Ascending aorta (tissue), 2 donors: ENCODE measurements at regions of chr16 and their contacts with region 1.

Region 1: GRCh38 chr16:51024703-51025102 is 126.4 kb downstream of the SALL1 start:
- DNase-seq: no peak
- H3K4me3 ChIP-seq: no peak overlapping the region
- H3K27ac ChIP-seq: no peak overlapping the region
- H3K4me1 ChIP-seq: no peaks in the 10 kb centered on the region
- H3K27me3 ChIP-seq: no peaks in the 10 kb centered on the region
- CTCF ChIP-seq: no peak

Region 2: GRCh38 chr16:50967827-50968612 is 56.7 kb before region 1 on chr16:
- intact Hi-C with region 1: loop called (anchors 10 kb)
- DNase-seq: no peak
- H3K4me3 ChIP-seq: no peak overlapping the region
- H3K27ac ChIP-seq: no peak overlapping the region
- H3K4me1 ChIP-seq: no peaks in the 10 kb centered on the region
- H3K27me3 ChIP-seq: no peaks in the 10 kb centered on the region
- CTCF ChIP-seq: no peak